ENCODE measurements at regions of chr12 and their contacts with region 1.

Region 1: DNA sequence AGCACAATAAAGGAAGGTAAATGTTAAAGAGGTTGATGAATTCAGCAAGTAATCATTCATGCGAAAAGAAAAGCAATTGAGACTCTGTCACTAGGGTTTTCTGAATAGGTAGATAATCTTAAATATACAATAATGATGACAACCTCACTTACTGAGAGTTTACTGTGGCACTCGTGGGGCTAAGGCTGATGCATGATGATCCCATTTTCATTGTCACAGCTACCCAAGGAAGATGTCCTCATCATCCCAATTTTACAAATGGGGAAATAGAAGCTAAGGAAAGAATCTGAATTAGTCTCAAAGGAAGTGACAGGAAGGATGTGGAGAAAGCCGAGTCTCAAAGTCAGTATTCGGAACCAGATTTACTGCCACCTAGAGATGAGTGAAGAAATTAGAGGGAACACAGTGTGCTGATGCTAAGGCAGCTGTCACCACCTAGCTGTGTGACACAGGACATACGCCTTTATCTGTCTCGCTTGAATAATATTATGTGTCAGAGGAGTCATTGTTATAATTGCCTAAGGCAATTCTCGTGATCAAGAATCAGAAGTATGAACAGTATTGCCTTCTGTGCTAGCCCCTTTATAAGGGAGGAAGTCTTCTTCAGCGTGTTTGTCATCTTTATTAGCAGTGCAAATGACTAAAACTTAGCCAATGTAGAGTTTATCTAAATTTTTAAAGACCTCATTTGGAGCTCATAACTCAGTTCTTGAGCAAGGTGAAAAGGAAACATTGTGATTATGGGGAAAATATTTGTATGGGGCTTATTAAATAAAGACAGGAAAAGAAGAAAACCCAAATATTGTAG is 63.2 kb downstream of the ERGIC2 start:
- DNase-seq: peak; percentile 68 to 87 (median 79)
- H3K4me3 ChIP-seq: no peak overlapping the region
- H3K4me3 Mint-ChIP-seq: no peak overlapping the region
- H3K27ac ChIP-seq: no peak overlapping the region
- H3K27ac Mint-ChIP-seq: peak overlapping the region in 5 of 7 donors; percentile 2 to 87 (median 41)
- H3K4me1 ChIP-seq: no peaks in the 10 kb centered on the region
- H3K4me1 Mint-ChIP-seq: peaks cover 7% of the 10 kb centered on the region
- H3K27me3 ChIP-seq: no peaks in the 10 kb centered on the region
- H3K27me3 Mint-ChIP-seq: no peaks in the 10 kb centered on the region
- CTCF ChIP-seq: peak; percentile 94

Region 2: DNA sequence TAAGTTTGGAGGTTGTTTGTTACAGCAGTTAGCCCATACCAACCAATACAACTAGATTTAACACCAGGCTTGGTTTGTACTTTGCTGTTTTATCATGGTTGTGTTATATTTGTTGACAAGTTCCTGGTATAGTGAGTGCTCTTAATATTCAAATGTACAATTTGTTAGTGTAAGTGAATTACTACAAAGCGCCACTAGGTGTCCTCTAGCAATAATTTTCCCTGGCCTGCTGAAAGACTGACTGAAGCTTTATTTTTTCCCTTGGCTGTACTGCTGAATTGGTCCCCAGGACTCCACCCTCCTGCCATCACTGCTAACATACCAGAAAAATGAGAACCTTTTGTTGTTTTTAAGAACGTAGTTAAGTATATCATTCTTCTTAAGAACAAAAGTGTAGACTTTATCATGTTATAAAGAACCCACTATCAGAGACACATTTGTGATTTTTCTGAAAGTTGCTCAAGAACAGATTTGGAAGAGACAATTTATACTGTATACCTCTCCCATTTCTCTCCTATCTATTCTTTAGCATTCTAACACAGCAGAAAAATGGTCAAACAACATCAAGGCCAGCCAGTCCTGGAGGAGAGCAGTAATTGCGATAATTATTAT is 244.0 kb before region 1 on chr12:
- intact Hi-C with region 1: loop called in 1 of 2 experiments (anchors 10 kb)
- DNase-seq: peak; percentile 34 to 65 (median 54)
- H3K4me3 ChIP-seq: no peak overlapping the region
- H3K4me3 Mint-ChIP-seq: no peak overlapping the region
- H3K27ac ChIP-seq: no peak overlapping the region
- H3K27ac Mint-ChIP-seq: no peak overlapping the region
- H3K4me1 ChIP-seq: no peaks in the 10 kb centered on the region
- H3K4me1 Mint-ChIP-seq: no peaks in the 10 kb centered on the region
- H3K27me3 ChIP-seq: no peaks in the 10 kb centered on the region
- H3K27me3 Mint-ChIP-seq: peaks cover 1 to 2% (median 2%) of the 10 kb centered on the region in 3 donors
- CTCF ChIP-seq: peak; percentile 83

Region 3: GRCh38 chr12:29088611-29089219 is 229.0 kb before region 1 on chr12:
- intact Hi-C with region 1: loop called in 1 of 2 experiments (anchors 10 kb)
- DNase-seq: peak in 2 of 3 donors; percentile 32 to 36
- H3K4me3 ChIP-seq: no peak overlapping the region
- H3K4me3 Mint-ChIP-seq: no peak overlapping the region
- H3K27ac ChIP-seq: no peak overlapping the region
- H3K27ac Mint-ChIP-seq: peak overlapping the region in 1 of 7 donors; percentile 75
- H3K4me1 ChIP-seq: no peaks in the 10 kb centered on the region
- H3K4me1 Mint-ChIP-seq: no peaks in the 10 kb centered on the region
- H3K27me3 ChIP-seq: no peaks in the 10 kb centered on the region
- H3K27me3 Mint-ChIP-seq: no peaks in the 10 kb centered on the region
- CTCF ChIP-seq: peak; percentile 72

Region 4: GRCh38 chr12:29207120-29207519 is 110.6 kb before region 1 on chr12:
- intact Hi-C with region 1: loop called in 1 of 2 experiments (anchors 10 kb)
- DNase-seq: peak; percentile 66 to 94 (median 91)
- H3K4me3 ChIP-seq: peak overlapping the region; percentile 23 to 65 (median 37)
- H3K4me3 Mint-ChIP-seq: peak overlapping the region; percentile 68 to 89
- H3K27ac ChIP-seq: peak overlapping the region; percentile 75 to 78
- H3K27ac Mint-ChIP-seq: peak overlapping the region; percentile 87 to 98 (median 93)
- H3K4me1 ChIP-seq: peaks cover 46 to 53% of the 10 kb centered on the region in 2 donors
- H3K4me1 Mint-ChIP-seq: peaks cover 54% of the 10 kb centered on the region
- H3K27me3 ChIP-seq: no peaks in the 10 kb centered on the region
- H3K27me3 Mint-ChIP-seq: peaks cover 0 to 3% (median 0%) of the 10 kb centered on the region in 3 donors
- CTCF ChIP-seq: no peak

Measured in CD14-positive monocyte (primary cell).